CD8-positive, alpha-beta T cell (primary cell): ENCODE measurements at regions of chr1 and their contacts with region 1.

Region 1: DNA sequence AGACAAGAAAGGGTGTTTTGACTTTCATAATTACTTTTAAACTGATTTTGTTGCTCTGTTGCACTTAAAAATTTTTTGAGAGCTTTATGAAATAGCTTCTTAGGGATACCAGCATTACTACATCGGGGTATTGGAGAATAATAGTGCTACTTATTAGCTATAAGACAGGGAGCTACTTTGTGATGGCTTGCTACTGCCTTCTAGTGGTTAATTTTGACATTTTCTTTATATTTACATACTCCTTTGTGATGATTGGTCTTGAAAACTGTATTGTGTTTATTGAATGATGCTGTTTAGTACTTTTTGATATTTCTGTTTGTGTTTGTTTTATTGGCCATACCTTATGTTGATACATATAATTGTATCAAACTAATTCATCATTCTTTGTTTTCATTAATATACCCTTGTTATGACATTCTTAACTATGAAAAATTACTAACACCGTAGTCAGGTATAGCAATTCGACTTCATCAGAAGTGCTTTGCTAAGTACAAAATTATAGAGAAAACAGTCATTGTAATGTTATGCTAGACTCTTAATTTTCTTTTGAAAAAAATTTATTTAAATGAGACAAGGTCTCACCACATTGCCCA is 85.5 kb downstream of the CLIC4 start:
- DNase-seq: peak in 2 of 9 experiments; percentile 68 to 74
- ATAC-seq: peak; percentile 52
- H3K4me3 ChIP-seq: no peak overlapping the region
- H3K4me3 Mint-ChIP-seq: no peak overlapping the region
- H3K27ac ChIP-seq: no peak overlapping the region
- H3K27ac Mint-ChIP-seq: no peak overlapping the region
- H3K4me1 ChIP-seq: no peaks in the 10 kb centered on the region
- H3K4me1 Mint-ChIP-seq: no peaks in the 10 kb centered on the region
- H3K27me3 ChIP-seq: peaks cover 0 to 3% of the 10 kb centered on the region in 2 experiments
- H3K27me3 Mint-ChIP-seq: peaks cover 13% of the 10 kb centered on the region
- CTCF ChIP-seq: peak; percentile 95

Region 2: GRCh38 chr1:24694380-24694843 is 136.4 kb before region 1 on chr1:
- CTCF ChIA-PET with region 1: interaction called, 197 read pairs
- POLR2A ChIA-PET with region 1: no interaction called
- intact Hi-C with region 1: loop called (anchors 2 kb)
- DNase-seq: peak in 4 of 9 experiments; percentile 10 to 44 (median 28)
- ATAC-seq: no peak
- H3K4me3 ChIP-seq: no peak overlapping the region
- H3K4me3 Mint-ChIP-seq: no peak overlapping the region
- H3K27ac ChIP-seq: no peak overlapping the region
- H3K27ac Mint-ChIP-seq: no peak overlapping the region
- H3K4me1 ChIP-seq: no peaks in the 10 kb centered on the region
- H3K4me1 Mint-ChIP-seq: no peaks in the 10 kb centered on the region
- H3K27me3 ChIP-seq: no peaks in the 10 kb centered on the region
- H3K27me3 Mint-ChIP-seq: no peaks in the 10 kb centered on the region
- CTCF ChIP-seq: no peak